Panc1 (cell line): ENCODE measurements at regions of chr3 and their contacts with region 1.

Region 1: DNA sequence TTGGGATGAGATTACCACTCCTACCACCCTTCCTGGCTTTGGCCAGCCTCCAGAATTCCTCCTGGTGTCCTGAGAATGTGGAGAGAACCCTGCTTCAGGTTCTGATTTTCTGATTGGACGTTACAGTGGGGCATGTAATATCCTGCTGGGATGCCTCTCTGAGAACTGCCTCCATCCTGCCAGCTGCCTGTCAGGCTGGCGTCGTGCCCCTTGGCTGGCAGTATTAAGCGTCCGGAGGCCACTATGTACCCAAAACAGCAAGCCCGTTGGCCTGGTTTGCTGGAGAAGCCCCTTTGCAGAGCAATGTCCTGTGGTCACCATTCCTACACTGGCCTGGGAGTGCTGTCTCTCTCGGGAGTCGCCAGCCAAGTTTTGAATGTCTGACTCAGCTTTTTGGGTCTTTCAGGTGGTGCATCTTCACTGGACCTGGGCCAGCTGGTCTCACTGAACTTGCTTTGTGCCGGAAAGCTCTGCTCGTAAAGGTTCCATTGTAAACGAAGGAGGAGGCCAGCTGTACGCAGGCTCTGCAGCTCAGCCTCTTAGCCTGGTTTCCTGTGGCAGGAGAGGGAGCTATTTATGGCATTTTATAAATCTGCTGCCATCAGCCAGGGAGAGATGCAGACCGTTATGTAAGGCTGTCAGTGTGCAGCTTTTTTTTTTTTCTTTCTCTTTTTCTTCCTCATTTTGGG is 19.1 kb upstream of the TRAK1 start:
- DNase-seq: no peak
- ATAC-seq: peak; percentile 86
- H3K4me3 ChIP-seq: peak overlapping the region; percentile 19 to 53
- H3K27ac ChIP-seq: peak overlapping the region; percentile 91
- H3K4me1 ChIP-seq: peaks cover 48% of the 10 kb centered on the region
- H3K27me3 ChIP-seq: no peaks in the 10 kb centered on the region
- CTCF ChIP-seq: no peak

Region 2: GRCh38 chr3:42025370-42026138 is 46.5 kb before region 1 on chr3:
- CTCF ChIA-PET with region 1: no interaction called
- POLR2A ChIA-PET with region 1: interaction called, 26 read pairs
- in situ Hi-C with region 1: no loop called
- intact Hi-C with region 1: loop called (anchors 5 kb)
- DNase-seq: no peak
- ATAC-seq: peak; percentile 75
- H3K4me3 ChIP-seq: peak overlapping the region in 1 of 2 experiments; percentile 36; a peak in 2 of 4 replicates
- H3K27ac ChIP-seq: peak overlapping the region; percentile 74
- H3K4me1 ChIP-seq: peaks cover 46% of the 10 kb centered on the region
- H3K27me3 ChIP-seq: no peaks in the 10 kb centered on the region
- CTCF ChIP-seq: no peak

Region 3: GRCh38 chr3:42043027-42043796 is 28.8 kb before region 1 on chr3:
- CTCF ChIA-PET with region 1: no interaction called
- POLR2A ChIA-PET with region 1: interaction called, 11 read pairs
- in situ Hi-C with region 1: no loop called
- intact Hi-C with region 1: no loop called
- DNase-seq: no peak
- ATAC-seq: peak; percentile 81
- H3K4me3 ChIP-seq: peak overlapping the region in 1 of 2 experiments; percentile 36; a peak in 2 of 4 replicates
- H3K27ac ChIP-seq: peak overlapping the region; percentile 86
- H3K4me1 ChIP-seq: peaks cover 33% of the 10 kb centered on the region
- H3K27me3 ChIP-seq: no peaks in the 10 kb centered on the region
- CTCF ChIP-seq: no peak

Region 4: DNA sequence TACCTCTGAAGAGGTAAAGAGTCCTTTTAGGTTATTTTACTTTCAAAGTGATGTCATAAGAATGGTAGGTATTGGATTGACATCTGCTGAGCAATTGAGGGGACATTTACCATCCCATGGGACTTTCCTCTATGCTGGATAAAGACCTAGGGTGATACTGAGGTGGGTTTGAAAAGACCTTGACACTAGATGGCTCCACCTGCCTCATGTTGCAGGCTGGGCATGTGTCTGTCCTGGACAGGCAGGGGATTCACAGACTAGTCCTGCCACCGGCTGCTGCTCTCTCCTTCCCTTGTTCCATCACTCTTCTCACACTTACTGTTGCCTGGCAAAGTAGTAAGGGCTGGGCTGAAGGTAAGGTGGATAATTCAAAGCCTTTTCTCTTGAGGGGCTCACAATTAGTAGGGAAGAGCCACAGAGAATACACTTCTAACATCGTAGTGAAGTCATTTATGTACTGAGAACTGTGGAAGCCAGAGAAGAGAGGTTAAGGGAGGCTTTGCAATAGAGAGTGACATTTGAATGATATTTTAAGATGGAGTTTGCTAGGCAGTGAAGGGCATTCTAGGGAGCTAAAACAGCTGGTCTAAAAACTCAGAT is 46.8 kb after region 1 on chr3:
- CTCF ChIA-PET with region 1: no interaction called
- POLR2A ChIA-PET with region 1: interaction called, 16 read pairs
- in situ Hi-C with region 1: no loop called
- intact Hi-C with region 1: no loop called
- DNase-seq: no peak
- ATAC-seq: peak; percentile 93
- H3K4me3 ChIP-seq: no peak overlapping the region
- H3K27ac ChIP-seq: no peak overlapping the region
- H3K4me1 ChIP-seq: no peaks in the 10 kb centered on the region
- H3K27me3 ChIP-seq: no peaks in the 10 kb centered on the region
- CTCF ChIP-seq: peak; percentile 54

Region 5: DNA sequence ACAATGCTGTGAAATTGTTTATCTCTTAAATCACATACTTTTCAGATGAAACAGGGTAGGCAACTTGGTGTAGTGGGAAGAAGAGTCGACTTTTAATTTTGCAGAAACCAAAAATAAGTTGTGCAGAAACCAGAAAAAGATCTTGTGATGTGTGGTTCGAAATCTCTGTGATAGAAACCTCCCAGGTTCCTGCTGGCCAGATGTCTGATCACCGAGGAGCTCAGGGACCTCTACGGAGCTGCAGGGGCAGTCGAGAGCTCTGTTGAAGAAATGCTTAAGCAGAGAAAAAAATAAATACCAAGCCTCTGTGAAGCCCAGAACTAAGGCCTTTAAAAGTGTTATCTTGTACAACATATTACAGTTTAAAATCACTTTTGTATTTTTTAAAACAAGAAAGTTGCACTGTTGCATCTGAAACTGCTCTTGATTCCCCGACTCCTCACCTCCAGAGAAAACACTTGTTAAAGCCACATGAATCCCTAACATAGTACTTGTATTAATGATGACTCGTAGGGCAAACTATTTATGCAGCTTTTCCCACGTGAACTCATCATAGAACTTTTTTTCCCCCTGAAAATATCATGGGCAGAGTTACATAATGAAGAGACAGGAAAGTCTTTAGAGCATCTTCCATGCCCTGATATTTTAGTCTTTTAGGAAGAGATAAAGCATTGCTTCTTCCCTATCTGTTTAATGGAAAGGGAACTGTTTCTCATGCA is 142.7 kb after region 1 on chr3:
- CTCF ChIA-PET with region 1: no interaction called
- POLR2A ChIA-PET with region 1: no interaction called
- in situ Hi-C with region 1: no loop called
- intact Hi-C with region 1: no loop called
- DNase-seq: no peak
- ATAC-seq: no peak
- H3K4me3 ChIP-seq: no peak overlapping the region
- H3K27ac ChIP-seq: no peak overlapping the region
- H3K4me1 ChIP-seq: no peaks in the 10 kb centered on the region
- H3K27me3 ChIP-seq: no peaks in the 10 kb centered on the region
- CTCF ChIP-seq: no peak